Panc1 (cell line): ENCODE measurements at regions of chr16 and their contacts with region 1.

Region 1: DNA sequence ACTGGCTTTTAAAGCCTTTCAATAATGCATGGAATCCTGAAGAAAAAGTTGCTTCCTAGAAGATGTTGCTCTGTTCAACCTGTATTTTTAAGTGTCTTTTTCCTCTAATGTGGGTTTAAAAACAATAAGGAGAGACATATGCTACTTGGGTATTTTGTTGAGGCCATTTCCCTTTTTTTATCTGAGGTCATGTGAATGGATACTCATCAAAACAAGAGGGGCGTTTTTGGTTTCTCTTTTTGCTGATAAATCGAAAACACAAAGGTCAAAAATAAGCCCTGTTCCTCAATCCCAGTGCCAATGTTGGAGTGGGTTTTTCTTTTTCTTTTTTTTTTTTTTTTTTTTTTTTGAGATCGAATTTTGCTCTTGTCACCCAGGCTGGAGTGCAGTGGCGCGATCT is 468.0 kb upstream of the RBFOX1 start:
- DNase-seq: no peak
- ATAC-seq: no peak
- H3K4me3 ChIP-seq: no peak overlapping the region
- H3K27ac ChIP-seq: no peak overlapping the region
- H3K4me1 ChIP-seq: no peaks in the 10 kb centered on the region
- H3K27me3 ChIP-seq: no peaks in the 10 kb centered on the region
- CTCF ChIP-seq: no peak

Region 2: DNA sequence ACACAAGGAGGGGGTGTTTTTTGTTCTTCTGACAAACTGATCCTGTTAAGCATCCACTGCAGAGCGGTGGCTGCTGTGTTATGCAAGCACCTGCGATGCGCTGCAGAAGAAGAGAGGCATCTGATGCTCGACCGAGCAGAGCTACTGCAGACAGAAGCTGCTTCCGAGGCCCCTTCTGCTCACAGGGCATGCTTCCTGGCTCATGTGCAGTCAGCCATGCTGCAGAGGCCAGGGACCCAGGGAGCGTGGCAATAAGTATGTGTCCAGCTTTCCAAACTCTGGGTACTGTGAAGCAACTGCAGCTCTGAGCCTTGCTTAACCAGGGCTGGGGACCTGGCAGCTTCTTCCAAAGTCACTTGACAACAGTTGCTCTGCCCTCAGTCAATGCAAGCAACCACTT is 19.3 kb after region 1 on chr16:
- CTCF ChIA-PET with region 1: no interaction called
- POLR2A ChIA-PET with region 1: no interaction called
- in situ Hi-C with region 1: no loop called
- intact Hi-C with region 1: loop called (anchors 1 kb)
- DNase-seq: no peak
- ATAC-seq: no peak
- H3K4me3 ChIP-seq: no peak overlapping the region
- H3K27ac ChIP-seq: no peak overlapping the region
- H3K4me1 ChIP-seq: no peaks in the 10 kb centered on the region
- H3K27me3 ChIP-seq: no peaks in the 10 kb centered on the region
- CTCF ChIP-seq: no peak

Region 3: DNA sequence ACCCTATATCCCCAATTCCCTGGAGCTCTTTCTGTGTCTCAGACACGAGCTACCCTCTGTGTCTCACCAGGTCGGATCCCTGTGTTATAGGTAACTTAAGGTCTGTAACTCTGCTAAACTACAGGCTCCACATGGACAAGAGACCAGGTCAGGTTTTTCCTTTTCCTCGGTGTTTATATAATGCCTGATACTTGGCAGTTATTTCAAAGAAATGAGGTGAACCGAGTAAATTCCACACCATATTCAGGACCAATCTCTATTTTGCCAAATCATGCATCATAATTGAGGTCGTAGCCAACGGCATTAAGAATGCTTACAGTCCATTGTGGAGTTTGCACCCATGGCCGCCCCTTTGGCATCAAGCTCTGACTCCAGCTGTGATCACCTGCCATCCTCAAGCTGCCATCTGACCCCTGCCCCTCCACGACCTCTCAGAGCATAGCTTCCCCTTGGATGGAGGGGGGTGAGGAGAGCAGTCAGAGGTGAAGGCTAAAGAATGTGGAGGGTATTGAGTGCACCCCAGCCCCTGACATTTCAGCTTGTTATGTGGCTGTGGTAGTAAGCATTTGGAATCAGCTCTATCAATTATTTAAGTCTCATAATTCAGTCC is 33.3 kb after region 1 on chr16:
- CTCF ChIA-PET with region 1: no interaction called
- POLR2A ChIA-PET with region 1: no interaction called
- in situ Hi-C with region 1: no loop called
- intact Hi-C with region 1: no loop called
- DNase-seq: no peak
- ATAC-seq: no peak
- H3K4me3 ChIP-seq: no peak overlapping the region
- H3K27ac ChIP-seq: no peak overlapping the region
- H3K4me1 ChIP-seq: no peaks in the 10 kb centered on the region
- H3K27me3 ChIP-seq: no peaks in the 10 kb centered on the region
- CTCF ChIP-seq: no peak